Activated naive CD8-positive, alpha-beta T cell treated with anti-CD3 and anti-CD28 coated beads, Interleukin-2, amount 10 ng/mL, durations not matched to agents 7 days and 5 days (primary cell): ENCODE measurements at regions of chr14 and their contacts with region 1.

Region 1: GRCh38 chr14:91060351-91061055 is at the start of gene RPS6KA5:
- DNase-seq: peak; percentile 98
- ATAC-seq: peak; percentile 85
- H3K4me3 Mint-ChIP-seq: peak within 1 kb of the TSS; percentile 90
- H3K27ac Mint-ChIP-seq: peak within 1 kb of the TSS; percentile 72
- H3K4me1 Mint-ChIP-seq: peaks cover 53% of the 10 kb centered on the region
- H3K27me3 Mint-ChIP-seq: no peaks in the 10 kb centered on the region
- total RNA-seq, gene RPS6KA5: 45.3 to 48.1 TPM

Region 2: DNA sequence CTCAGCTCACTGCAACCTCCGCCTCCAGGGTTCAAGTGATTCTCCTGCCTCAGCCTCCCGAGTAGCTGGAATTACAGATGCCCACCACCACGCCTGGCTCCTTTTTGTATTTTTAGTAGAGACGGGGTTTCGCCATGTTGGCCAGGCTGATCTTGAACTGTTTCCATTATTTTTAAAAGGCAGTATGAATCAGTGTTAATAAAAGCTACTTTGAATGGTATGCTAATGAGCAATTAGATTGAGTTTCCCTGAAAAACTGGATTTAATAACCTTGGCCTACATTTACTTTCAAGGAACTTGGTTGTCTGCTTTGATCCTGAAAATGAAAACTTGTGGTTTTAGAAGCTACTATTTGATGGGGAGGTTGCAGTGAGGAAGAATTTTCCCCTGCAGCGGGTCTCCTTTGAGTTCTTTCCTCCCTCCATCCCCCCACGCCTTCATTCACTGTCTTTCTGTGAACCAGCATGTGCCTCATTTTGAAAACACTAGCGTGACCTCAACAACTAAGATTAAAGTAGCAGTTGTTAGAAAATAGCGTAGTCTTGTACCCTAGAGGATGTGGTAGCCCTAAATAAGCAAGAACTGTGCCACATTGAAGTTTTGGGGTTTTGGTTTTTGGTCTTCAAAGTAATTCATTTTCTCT is 17.7 kb after region 1 on chr14:
- POLR2A ChIA-PET with region 1: interaction called, 37 read pairs
- DNase-seq: peak; percentile 36
- ATAC-seq: peak; percentile 97
- H3K4me3 Mint-ChIP-seq: peak overlapping the region; percentile 63
- H3K27ac Mint-ChIP-seq: peak overlapping the region; percentile 88
- H3K4me1 Mint-ChIP-seq: peaks cover 57% of the 10 kb centered on the region
- H3K27me3 Mint-ChIP-seq: no peaks in the 10 kb centered on the region